Activated CD4-positive, alpha-beta memory T cell treated with anti-CD3 and anti-CD28 coated beads for 36 hours (primary cell): ENCODE measurements at regions of chr13 and their contacts with region 1.

Region 1: DNA sequence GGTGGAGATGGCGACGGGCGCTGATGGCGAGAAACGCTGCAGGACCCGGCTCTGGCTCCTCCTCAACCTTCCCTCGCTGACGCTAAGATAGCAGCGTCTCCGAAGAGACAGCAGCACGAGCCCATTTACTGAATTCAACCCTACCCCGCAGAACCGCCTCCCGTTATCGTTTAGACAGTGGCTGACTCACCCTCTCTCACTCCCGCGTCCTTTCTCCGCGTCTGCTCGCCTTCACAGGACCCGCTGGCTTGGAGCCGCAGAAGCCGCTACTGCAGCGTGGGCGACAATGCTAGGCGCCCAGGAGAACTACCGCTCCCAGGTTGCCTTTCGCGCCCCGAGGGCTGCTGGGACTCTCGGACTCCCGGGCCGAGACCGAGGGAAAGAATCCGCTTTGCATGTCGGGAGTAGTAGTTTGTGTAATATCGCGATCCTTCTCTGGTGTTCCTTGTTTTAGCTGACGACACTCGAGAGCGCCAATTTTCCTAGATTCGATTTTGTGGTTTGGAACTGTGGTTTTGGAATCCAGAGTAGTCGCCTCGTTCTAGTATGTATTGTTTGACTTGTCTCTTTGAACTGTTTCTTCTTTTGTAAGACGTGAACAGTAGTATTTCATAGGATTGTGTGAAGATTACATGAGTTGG is at the start of gene KBTBD6:
- DNase-seq: peak; percentile 98
- H3K4me3 Mint-ChIP-seq: peak within 1 kb of the TSS; percentile 92
- H3K27ac Mint-ChIP-seq: peak within 1 kb of the TSS; percentile 86
- H3K4me1 Mint-ChIP-seq: peaks cover 43% of the 10 kb centered on the region
- H3K27me3 Mint-ChIP-seq: no peaks in the 10 kb centered on the region
- total RNA-seq, gene KBTBD6: 3.6 to 4.2 TPM

Region 2: DNA sequence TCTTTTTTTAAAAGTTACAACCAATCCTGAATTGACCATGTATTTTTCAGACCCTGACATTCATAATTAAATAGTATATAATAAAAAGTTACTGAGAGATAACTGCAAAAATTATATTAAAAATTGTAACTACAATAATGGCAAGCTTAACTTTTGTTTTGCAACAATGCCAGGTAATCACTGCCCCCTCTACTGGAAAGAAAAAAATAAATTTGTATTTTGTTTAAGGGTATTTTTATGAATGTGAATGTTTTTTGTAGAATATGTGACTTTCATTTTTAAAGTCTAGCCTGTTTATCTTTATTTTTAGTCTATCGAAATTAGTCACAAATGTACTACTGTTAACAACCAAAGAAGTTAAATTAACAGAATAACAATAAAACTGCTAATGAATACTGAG is 383.3 kb before region 1 on chr13:
- CTCF ChIA-PET with region 1: no interaction called
- POLR2A ChIA-PET with region 1: no interaction called
- intact Hi-C with region 1: no loop called
- DNase-seq: no peak
- H3K4me3 Mint-ChIP-seq: no peak overlapping the region
- H3K27ac Mint-ChIP-seq: no peak overlapping the region
- H3K4me1 Mint-ChIP-seq: peaks cover 7% of the 10 kb centered on the region
- H3K27me3 Mint-ChIP-seq: no peaks in the 10 kb centered on the region

Region 3: DNA sequence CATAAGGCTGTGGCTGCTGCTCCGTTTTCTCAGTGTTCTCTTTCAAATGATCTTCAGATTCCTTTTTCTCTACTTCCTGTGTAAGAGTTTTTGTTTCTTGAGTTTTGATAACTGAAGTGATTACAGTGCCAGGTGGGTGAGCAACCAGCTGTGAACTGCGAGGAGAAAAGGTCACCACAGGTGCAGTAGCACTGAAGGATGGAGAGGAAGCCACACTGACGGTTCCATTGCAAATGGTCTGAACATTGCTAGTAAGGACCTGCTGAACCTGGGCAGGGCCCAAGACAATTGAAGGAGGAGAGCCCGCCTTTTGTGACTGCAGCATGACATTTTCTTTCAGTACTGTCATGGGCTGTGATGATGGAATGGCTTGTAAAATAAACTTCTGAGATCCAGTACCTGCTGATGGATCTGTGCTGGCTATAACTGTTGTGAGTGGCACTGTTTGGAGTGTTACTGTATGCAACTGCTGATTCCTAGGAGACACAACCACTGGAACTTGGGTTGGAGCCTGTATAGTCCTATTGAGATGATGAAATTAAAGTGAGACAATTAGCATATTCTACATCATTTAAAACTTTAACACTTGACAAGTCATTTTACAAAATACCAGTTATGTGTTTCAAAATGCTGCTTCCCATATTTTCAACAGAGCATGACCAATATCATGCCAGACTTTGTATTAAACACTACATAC is 199.0 kb before region 1 on chr13:
- CTCF ChIA-PET with region 1: no interaction called
- POLR2A ChIA-PET with region 1: no interaction called
- intact Hi-C with region 1: no loop called
- DNase-seq: peak; percentile 16
- H3K4me3 Mint-ChIP-seq: no peak overlapping the region
- H3K27ac Mint-ChIP-seq: peak overlapping the region; percentile 82
- H3K4me1 Mint-ChIP-seq: peaks cover 25% of the 10 kb centered on the region
- H3K27me3 Mint-ChIP-seq: no peaks in the 10 kb centered on the region

Region 4: GRCh38 chr13:41179593-41180250 is 47.1 kb after region 1 on chr13:
- CTCF ChIA-PET with region 1: no interaction called
- POLR2A ChIA-PET with region 1: no interaction called
- intact Hi-C with region 1: loop called (anchors 5 kb)
- DNase-seq: no peak
- H3K4me3 Mint-ChIP-seq: no peak overlapping the region
- H3K27ac Mint-ChIP-seq: peak overlapping the region; percentile 52
- H3K4me1 Mint-ChIP-seq: peaks cover 17% of the 10 kb centered on the region
- H3K27me3 Mint-ChIP-seq: no peaks in the 10 kb centered on the region

Region 5: GRCh38 chr13:41263261-41264027 is 130.8 kb after region 1 on chr13 and contains the start of gene MTRF1:
- CTCF ChIA-PET with region 1: no interaction called
- POLR2A ChIA-PET with region 1: no interaction called
- intact Hi-C with region 1: loop called (anchors 1 kb)
- DNase-seq: peak; percentile 84
- H3K4me3 Mint-ChIP-seq: peak within 1 kb of the TSS; percentile 90
- H3K27ac Mint-ChIP-seq: peak within 1 kb of the TSS; percentile 96
- H3K4me1 Mint-ChIP-seq: peaks cover 13% of the 10 kb centered on the region
- H3K27me3 Mint-ChIP-seq: no peaks in the 10 kb centered on the region
- total RNA-seq, gene MTRF1: 16.2 to 21.5 TPM

Region 6: GRCh38 chr13:41310963-41311606 is 178.5 kb after region 1 on chr13 and contains the start of gene NAA16:
- CTCF ChIA-PET with region 1: no interaction called
- POLR2A ChIA-PET with region 1: no interaction called
- intact Hi-C with region 1: loop called (anchors 1 kb)
- DNase-seq: peak; percentile 97
- H3K4me3 Mint-ChIP-seq: peak within 1 kb of the TSS; percentile 93
- H3K27ac Mint-ChIP-seq: peak within 1 kb of the TSS; percentile 92
- H3K4me1 Mint-ChIP-seq: peaks cover 34% of the 10 kb centered on the region
- H3K27me3 Mint-ChIP-seq: no peaks in the 10 kb centered on the region
- total RNA-seq, gene NAA16: 19.2 to 23.2 TPM

Region 7: DNA sequence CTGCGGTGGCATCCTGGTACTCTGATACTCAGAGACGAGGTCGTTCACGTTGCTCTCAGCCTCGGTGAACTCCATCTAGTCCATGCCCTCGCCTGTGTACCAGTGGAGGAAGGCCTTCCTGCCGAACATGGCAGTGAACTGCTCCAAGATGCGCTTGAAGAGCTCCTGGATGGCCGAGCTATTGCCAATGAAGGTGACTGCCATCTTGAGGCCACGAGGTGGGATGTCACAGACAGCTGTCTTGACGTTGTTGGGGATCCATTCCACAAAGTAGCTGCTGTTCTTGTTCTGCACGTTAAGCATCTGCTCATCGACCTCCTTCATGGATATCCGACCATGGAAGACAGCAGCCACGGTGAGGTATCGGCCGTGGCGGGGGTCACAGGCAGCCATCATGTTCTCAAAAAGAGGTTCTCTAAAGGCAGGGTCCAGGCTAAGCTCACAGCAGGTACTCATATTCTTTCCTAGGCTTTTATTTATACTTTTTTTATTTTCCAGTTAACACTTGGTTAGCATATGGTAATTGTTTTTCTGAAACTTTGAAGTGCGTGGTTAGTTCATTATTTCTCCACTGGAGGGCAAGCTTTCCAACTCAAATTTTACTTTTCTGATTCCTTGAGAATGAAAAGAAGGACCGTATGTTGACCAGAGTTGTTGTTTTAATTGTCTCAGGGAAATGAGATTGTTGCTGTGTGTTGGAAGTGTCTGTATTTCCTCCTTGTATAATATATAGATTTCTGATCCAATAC is 252.3 kb after region 1 on chr13:
- CTCF ChIA-PET with region 1: no interaction called
- POLR2A ChIA-PET with region 1: no interaction called
- intact Hi-C with region 1: no loop called
- DNase-seq: no peak
- H3K4me3 Mint-ChIP-seq: no peak overlapping the region
- H3K27ac Mint-ChIP-seq: no peak overlapping the region
- H3K4me1 Mint-ChIP-seq: peaks cover 20% of the 10 kb centered on the region
- H3K27me3 Mint-ChIP-seq: no peaks in the 10 kb centered on the region